Mammary epithelial cell (primary cell): ENCODE measurements at regions of chr11 and their contacts with region 1.

Region 1: GRCh38 chr11:299951-300735 is 817 bp upstream of the IFITM5 start:
- DNase-seq: no peak
- H3K4me3 ChIP-seq: no peak overlapping the region
- H3K27ac ChIP-seq: no peak overlapping the region
- H3K4me1 ChIP-seq: no peaks in the 10 kb centered on the region
- H3K27me3 ChIP-seq: peaks cover 2% of the 10 kb centered on the region
- CTCF ChIP-seq: no peak

Region 2: GRCh38 chr11:257766-258493 is 42.2 kb before region 1 on chr11:
- CTCF ChIA-PET with region 1: no interaction called
- dilution Hi-C with region 1: loop called (anchors 5 kb)
- in situ Hi-C with region 1: no loop called
- intact Hi-C with region 1: no loop called
- DNase-seq: no peak
- H3K4me3 ChIP-seq: no peak overlapping the region
- H3K27ac ChIP-seq: no peak overlapping the region
- H3K4me1 ChIP-seq: no peaks in the 10 kb centered on the region
- H3K27me3 ChIP-seq: no peaks in the 10 kb centered on the region
- CTCF ChIP-seq: peak; percentile 5 to 37

Region 3: DNA sequence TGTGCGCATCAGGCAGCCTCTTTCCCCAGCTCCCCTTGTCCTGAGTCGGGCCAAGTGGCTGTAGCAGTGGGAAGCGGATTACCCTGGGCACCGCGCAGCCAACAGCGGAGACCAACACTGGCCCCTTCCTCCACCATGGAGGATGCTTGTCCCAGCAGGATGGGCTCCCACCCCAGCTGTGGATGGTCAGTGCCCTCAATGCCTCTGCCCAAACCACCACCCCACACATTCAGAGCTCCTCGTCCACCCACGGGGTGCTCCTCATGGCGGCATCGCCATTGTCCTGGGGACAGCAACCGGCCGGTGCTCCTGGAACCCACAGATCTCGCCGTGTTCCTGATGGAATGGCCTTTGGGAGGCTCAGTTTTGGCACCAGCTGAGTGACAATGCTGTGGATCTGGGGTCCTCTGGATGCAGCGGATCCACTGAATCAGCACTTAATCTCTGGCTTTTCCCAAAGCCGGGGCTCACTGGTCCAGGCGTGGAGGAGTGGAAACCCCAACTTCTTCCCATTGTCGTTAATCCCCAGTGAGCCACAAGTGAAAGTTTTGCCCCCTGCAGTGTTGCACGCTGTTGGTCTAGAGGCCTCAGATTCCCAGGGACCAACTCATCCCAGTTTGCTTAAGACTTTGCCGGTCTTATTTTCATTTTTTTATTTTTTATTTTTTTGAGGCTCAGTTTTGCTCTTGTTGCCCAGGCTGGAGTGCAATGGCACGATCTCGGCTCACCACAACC is 65.0 kb after region 1 on chr11:
- CTCF ChIA-PET with region 1: no interaction called
- dilution Hi-C with region 1: no loop called
- in situ Hi-C with region 1: no loop called
- intact Hi-C with region 1: no loop called
- DNase-seq: no peak
- H3K4me3 ChIP-seq: no peak overlapping the region
- H3K27ac ChIP-seq: no peak overlapping the region
- H3K4me1 ChIP-seq: peaks cover 23% of the 10 kb centered on the region
- H3K27me3 ChIP-seq: peaks cover 5% of the 10 kb centered on the region
- CTCF ChIP-seq: no peak

Region 4: DNA sequence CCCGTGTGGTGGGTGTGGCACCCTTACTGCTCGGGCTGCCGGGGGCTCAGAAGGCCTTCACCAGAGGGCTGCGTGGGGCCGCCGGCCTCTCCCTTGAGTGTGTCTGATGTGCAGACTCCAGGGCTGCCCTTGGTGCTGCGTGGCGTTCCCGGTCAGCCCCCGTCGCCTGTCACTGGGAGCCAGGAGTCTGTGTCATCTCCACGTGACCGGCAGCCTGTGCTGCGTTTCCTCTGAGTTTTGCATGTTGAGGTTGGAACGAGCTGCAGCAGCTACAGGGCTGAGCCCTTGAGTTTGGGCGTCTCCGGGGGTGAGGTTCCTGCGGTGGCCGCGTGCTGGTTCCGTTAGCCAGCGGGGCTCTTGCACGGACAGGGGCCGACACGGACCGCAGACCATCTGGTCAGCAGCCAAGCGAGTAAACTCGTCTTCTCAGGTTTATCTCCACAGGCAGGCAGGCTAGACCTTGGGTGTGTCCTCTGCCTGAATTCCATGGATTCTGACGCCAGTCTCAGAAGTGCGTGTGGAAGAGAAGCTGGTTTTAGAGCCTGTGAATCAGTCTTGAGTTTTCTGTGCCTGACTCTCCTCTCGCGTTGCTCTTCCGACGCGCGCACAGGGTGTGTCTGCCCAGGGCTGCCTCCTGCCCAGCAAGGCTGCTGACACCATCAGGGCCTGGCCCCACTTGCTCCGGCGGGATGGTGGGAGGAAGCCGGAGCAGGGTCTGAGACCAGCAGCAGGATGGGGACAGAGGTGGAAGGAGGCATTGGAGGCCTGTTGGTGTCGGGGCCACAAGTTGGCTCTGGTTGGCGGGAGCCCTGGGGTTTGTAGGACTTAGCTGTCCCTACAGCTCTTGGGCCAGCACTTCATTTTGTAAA is 160.4 kb after region 1 on chr11:
- CTCF ChIA-PET with region 1: no interaction called
- dilution Hi-C with region 1: no loop called
- in situ Hi-C with region 1: no loop called
- intact Hi-C with region 1: no loop called
- DNase-seq: no peak
- H3K4me3 ChIP-seq: no peak overlapping the region
- H3K27ac ChIP-seq: no peak overlapping the region
- H3K4me1 ChIP-seq: no peaks in the 10 kb centered on the region
- H3K27me3 ChIP-seq: no peaks in the 10 kb centered on the region
- CTCF ChIP-seq: no peak

Region 5: DNA sequence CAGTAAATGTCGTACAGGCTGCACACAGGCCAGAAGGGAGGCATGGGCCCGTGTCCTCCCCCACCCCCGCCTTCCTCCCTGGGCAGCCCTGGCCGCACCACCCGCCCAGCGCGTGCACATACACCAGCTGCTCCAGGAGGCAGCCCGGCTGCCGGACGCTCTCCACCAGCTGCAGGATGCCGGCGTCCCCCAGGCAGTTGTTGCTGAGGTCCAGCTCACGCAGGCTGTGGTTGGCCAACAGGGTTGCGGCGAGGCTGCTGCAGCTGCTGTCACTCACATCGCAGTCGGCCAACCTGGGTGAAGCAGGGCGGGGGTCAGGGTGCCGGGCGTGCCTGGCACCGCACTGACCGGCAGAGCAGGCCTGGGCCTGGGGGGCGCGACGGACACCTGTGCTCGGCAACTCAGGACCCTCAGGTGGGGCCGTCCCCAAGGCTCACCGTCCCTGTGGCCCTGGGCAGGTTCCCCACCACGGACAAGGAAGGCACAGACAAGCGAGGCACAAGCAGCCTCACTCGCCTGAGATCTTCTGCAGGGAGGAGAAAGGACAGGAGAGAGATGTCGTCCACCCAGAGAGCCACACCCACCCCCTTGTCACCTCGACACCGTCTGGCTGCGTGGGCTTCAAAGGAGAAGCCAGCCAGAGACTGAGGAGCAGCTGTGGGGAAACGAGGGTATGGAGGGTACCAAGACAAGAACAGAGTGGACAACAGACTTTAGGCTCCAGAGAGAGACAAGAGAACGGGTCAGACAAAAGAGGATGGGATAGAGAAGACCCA is 194.8 kb after region 1 on chr11:
- CTCF ChIA-PET with region 1: no interaction called
- dilution Hi-C with region 1: loop called (anchors 5 kb)
- in situ Hi-C with region 1: no loop called
- intact Hi-C with region 1: no loop called
- DNase-seq: no peak
- H3K4me3 ChIP-seq: no peak overlapping the region
- H3K27ac ChIP-seq: no peak overlapping the region
- H3K4me1 ChIP-seq: no peaks in the 10 kb centered on the region
- H3K27me3 ChIP-seq: no peaks in the 10 kb centered on the region
- CTCF ChIP-seq: no peak